ENCODE measurements at regions of chr1 and their contacts with region 1.

Region 1: DNA sequence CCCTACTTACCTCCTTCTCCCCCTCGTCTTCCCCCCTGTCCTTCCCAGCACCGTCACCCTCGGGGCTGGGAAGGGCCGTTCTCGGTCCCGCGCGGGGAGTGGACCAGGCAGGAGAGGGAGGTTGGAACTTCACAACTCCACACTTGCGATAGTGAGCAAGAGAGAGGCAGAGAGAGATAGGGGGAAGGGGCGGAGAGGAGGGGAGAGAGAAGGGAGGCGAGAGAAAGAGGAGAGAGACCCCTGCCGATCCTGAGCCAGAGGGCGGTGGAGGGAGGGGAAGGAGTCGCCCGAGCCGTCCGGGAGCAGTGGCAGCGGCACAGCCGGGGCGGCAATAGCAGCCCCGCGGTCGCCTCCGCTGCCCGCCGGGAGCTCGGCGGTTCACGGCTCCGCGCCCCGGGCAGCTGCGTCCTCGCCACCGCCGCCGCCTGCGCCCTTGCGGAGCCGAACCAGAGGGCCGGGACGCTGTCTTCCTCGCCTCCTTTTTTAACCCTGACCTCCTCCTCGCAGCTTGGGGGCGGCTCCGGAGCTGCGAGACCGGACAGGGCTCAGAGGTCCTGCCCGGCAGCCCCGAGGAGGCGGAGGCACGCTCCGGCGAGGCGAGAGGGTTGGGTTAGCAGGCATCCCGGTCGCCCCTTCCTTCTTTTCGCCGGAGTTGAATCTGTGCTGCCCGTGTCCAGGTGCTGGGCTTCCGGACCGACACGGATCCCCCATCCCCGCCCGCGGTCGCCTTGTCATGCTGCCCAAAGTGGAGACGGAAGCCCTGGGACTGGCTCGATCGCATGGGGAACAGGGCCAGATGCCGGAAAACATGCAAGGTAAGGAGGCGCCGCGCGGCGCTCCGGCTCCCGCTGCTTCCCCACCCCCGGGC is 11.7 kb downstream of the NR5A2 start:
- DNase-seq: no peak
- H3K4me3 Mint-ChIP-seq: peak overlapping the region; percentile 72
- H3K27ac Mint-ChIP-seq: no peak overlapping the region
- H3K4me1 Mint-ChIP-seq: peaks cover 27% of the 10 kb centered on the region
- H3K27me3 Mint-ChIP-seq: peaks cover 77% of the 10 kb centered on the region

Region 2: DNA sequence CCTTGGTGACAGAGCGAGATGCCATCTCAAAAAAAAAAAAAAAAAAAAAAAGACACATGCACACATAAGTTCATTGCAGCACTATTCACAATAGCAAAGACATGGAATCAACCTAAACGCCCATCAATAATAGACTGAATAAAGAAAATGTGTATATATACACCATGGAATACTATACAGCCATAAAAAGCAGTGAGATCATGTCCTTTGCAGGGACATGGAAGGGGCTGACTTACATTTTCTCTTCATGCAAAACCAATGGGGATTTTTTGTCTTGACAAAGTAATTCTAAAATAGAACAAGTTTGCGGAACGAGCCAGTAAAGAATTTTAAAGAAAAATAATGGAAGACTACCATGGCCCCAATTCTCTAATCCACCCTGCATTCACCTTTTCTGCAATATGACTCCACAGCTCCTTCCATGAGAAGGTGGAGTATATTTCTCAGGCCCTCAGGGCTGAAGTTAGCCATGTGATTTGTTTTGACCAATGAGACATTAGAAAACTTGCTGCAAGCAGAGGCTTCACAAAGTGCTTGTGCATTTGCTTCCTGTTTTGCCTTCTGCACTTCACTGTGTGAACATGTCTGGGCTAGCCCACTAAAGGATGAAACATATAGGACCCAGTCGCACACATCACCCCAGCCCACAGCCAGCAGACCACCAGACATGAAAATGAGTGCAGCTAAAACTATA is 90.5 kb before region 1 on chr1:
- intact Hi-C with region 1: loop called (anchors 5 kb)
- DNase-seq: no peak
- H3K4me3 Mint-ChIP-seq: no peak overlapping the region
- H3K27ac Mint-ChIP-seq: no peak overlapping the region
- H3K4me1 Mint-ChIP-seq: no peaks in the 10 kb centered on the region
- H3K27me3 Mint-ChIP-seq: peaks cover 50% of the 10 kb centered on the region

Measured in activated T-helper 1 cell treated with anti-CD3 and anti-CD28 coated beads, Interleukin-12 subunit alpha, Interleukin-12 subunit beta, Interleukin-2, Interleukin-4 antibody, amounts not matched to agents 30 ng/mL and 10 ng/mL and 1 ng/mL, durations not matched to agents 14 hours and 24 hours and 36 hours (primary cell).